ENCODE measurements at regions of chr2 and their contacts with region 1.

Region 1: GRCh38 chr2:109722026-109722425 is 72.1 kb upstream of the RGPD5 start:
- DNase-seq: peak; percentile 63 to 69
- H3K4me3 ChIP-seq: no peak overlapping the region
- H3K27ac ChIP-seq: no peak overlapping the region
- H3K4me1 ChIP-seq: no peaks in the 10 kb centered on the region
- H3K27me3 ChIP-seq: no peaks in the 10 kb centered on the region
- CTCF ChIP-seq: no peak
- POLR2A ChIP-seq: no peak

Region 2: GRCh38 chr2:108927936-108928659 is 793.9 kb before region 1 on chr2:
- intact Hi-C with region 1: loop called (anchors 10 kb)
- DNase-seq: peak; percentile 20 to 34
- H3K4me3 ChIP-seq: no peak overlapping the region
- H3K27ac ChIP-seq: no peak overlapping the region
- H3K4me1 ChIP-seq: no peaks in the 10 kb centered on the region
- H3K27me3 ChIP-seq: no peaks in the 10 kb centered on the region
- CTCF ChIP-seq: peak; percentile 47 to 71 (median 52)
- POLR2A ChIP-seq: no peak

Region 3: GRCh38 chr2:109663721-109664120 is 58.3 kb before region 1 on chr2:
- intact Hi-C with region 1: no loop called
- DNase-seq: peak; percentile 46 to 58
- H3K4me3 ChIP-seq: no peak overlapping the region
- H3K27ac ChIP-seq: no peak overlapping the region
- H3K4me1 ChIP-seq: peaks cover 3 to 4% of the 10 kb centered on the region in 2 donors
- H3K27me3 ChIP-seq: no peaks in the 10 kb centered on the region
- CTCF ChIP-seq: no peak
- POLR2A ChIP-seq: no peak

Measured in thyroid gland (tissue), 4 donors.